Activated T-helper 1 cell treated with anti-CD3 and anti-CD28 coated beads, Interleukin-12 subunit alpha, Interleukin-12 subunit beta, Interleukin-2, Interleukin-4 antibody, amounts not matched to agents 30 ng/mL and 10 ng/mL and 1 ng/mL, durations not matched to agents 14 hours and 24 hours and 36 hours (primary cell): ENCODE measurements at regions of chr7 and their contacts with region 1.

Region 1: DNA sequence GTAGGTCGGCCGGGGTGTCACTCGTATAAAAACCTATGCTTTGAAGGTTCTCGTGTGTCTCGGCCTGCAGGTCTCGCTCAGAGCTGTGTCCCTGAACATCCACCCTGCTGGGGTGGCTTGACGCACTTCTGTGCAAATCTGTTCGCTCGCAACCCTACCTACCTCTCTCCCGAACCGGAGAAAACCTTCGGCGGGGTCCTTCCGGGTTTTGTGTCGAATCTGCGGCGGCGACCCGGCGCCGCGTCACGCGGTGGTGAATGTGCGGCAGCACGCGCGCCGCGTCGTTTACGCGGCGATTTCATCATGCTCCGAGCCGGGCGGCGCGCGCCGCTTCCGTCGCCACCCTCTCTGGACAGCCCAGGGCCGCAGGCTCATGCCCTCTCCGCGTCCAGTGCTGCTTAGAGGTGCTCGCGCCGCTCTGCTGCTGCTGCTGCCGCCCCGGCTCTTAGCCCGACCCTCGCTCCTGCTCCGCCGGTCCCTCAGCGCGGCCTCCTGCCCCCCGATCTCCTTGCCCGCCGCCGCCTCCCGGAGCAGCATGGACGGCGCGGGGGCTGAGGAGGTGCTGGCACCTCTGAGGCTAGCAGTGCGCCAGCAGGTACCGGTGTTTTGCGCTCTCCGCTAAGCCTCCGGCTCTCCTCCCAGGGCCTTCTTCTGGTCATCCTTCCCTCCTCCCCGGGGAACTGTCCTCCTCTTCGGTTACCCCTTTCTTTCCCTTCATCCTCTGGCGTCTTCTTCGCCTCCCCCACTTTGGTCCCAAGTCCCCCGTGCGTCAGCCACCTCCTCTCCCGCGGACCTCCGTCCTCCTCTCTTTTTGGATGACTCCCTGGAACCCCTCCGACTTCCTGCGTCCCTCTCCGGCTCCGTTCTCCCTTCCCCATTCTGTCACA is at the start of gene GARS1:
- DNase-seq: peak; percentile 88
- H3K4me3 Mint-ChIP-seq: peak within 1 kb of the TSS; percentile 99
- H3K27ac Mint-ChIP-seq: peak within 1 kb of the TSS; percentile 99
- H3K4me1 Mint-ChIP-seq: peaks cover 71% of the 10 kb centered on the region
- H3K27me3 Mint-ChIP-seq: no peaks in the 10 kb centered on the region
- total RNA-seq, gene GARS1: 234 and 250 TPM in 2 replicates

Region 2: DNA sequence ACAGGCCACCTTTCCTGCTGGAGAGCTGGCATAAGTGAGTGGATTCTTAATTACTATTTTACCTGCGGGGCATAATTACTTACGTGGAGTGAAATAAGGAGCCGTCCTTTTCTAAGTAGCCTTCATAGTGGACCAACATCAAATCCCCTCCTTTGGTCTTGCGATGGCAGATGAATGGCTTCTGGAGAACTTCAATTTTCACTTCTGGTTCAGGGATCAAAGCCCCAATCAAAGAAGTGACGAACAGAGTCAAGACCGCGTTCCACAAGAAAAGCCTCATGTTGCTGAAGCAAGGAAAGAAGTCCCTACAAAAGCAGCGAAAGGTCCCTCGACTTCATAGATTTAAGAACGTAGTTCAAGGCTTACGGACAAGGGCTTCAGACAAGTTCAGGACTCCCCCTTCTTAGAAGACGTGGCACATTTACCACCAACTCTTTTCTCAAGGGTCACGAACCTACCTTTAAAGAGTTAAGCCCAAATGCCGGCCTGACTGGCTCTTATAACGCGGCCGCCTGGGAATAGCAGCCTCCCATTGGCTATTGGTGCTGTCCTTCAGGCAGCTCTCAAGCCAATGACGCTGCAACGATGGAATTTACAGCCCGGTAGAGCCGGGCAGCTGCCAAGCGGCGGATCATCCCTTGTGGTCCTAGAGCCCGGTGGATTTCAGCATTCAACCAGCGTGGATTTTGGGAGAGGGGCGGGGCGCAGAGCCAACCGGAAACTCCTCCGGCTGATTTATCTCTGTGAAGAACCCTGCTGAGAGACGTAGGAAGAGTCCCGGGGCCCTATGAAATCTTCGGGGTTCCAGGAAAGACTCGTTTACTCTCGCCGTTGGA is 568.3 kb before region 1 on chr7 and contains the start of gene FKBP14:
- intact Hi-C with region 1: loop called (anchors 1 kb)
- DNase-seq: peak; percentile 91
- H3K4me3 Mint-ChIP-seq: no peak within 1 kb of the TSS
- H3K27ac Mint-ChIP-seq: peak within 1 kb of the TSS; percentile 89
- H3K4me1 Mint-ChIP-seq: peaks cover 44% of the 10 kb centered on the region
- H3K27me3 Mint-ChIP-seq: no peaks in the 10 kb centered on the region
- total RNA-seq, gene FKBP14: 8.4 and 10.6 TPM in 2 replicates

Region 3: DNA sequence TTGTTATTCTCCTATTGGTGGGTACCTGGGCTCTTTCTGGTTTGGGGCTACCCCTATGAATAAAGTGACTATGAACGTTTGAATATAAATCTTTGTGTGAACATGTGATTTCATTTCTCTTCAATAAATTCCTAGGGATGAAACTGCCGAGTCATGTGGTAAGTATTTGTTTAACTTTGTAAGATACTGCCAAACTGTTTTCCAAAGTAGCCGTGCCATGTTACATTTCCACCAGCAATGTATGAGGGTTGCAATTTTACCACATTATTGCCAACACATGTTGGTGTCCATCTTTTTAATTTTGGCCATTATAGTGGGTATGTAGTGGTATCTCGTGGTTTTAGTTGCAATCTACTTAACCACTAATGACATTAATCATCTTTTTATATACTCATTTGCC is 215.7 kb before region 1 on chr7:
- intact Hi-C with region 1: no loop called
- DNase-seq: no peak
- H3K4me3 Mint-ChIP-seq: no peak overlapping the region
- H3K27ac Mint-ChIP-seq: no peak overlapping the region
- H3K4me1 Mint-ChIP-seq: no peaks in the 10 kb centered on the region
- H3K27me3 Mint-ChIP-seq: no peaks in the 10 kb centered on the region

Region 4: GRCh38 chr7:30478349-30479201 is 116.2 kb before region 1 on chr7 and contains the start of gene NOD1:
- intact Hi-C with region 1: loop called (anchors 2 kb)
- DNase-seq: peak; percentile 71
- H3K4me3 Mint-ChIP-seq: peak within 1 kb of the TSS; percentile 90
- H3K27ac Mint-ChIP-seq: peak within 1 kb of the TSS; percentile 91
- H3K4me1 Mint-ChIP-seq: peaks cover 61% of the 10 kb centered on the region
- H3K27me3 Mint-ChIP-seq: no peaks in the 10 kb centered on the region
- total RNA-seq, gene NOD1: 9.1 and 13.1 TPM in 2 replicates

Region 5: DNA sequence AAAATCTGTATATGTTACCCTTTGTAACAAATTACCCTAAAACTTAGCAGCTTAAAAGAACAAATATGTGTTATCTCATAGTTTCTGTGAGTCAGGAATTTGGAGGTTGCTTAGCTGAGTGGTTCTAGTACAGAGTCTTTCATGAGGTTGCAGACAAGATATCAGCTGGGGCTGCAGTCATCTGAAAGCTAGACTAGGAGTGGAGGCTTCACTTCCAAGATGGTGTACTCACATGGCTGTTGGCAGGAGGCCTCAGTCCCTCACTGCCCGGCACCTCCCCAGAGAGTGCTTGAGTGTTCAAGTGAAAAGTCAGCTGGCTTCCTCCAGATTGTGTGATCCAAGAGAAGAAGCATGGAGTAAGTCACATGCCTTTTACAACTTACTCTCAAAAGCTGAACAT is 73.3 kb before region 1 on chr7:
- intact Hi-C with region 1: no loop called
- DNase-seq: no peak
- H3K4me3 Mint-ChIP-seq: no peak overlapping the region
- H3K27ac Mint-ChIP-seq: no peak overlapping the region
- H3K4me1 Mint-ChIP-seq: no peaks in the 10 kb centered on the region
- H3K27me3 Mint-ChIP-seq: no peaks in the 10 kb centered on the region

Region 6: GRCh38 chr7:30605832-30606231 is 11.0 kb after region 1 on chr7:
- intact Hi-C with region 1: loop called (anchors 1 kb)
- DNase-seq: no peak
- H3K4me3 Mint-ChIP-seq: no peak overlapping the region
- H3K27ac Mint-ChIP-seq: no peak overlapping the region
- H3K4me1 Mint-ChIP-seq: peaks cover 37% of the 10 kb centered on the region
- H3K27me3 Mint-ChIP-seq: no peaks in the 10 kb centered on the region

Region 7: GRCh38 chr7:30627026-30627425 is 32.2 kb after region 1 on chr7:
- intact Hi-C with region 1: loop called (anchors 2 kb)
- DNase-seq: no peak
- H3K4me3 Mint-ChIP-seq: no peak overlapping the region
- H3K27ac Mint-ChIP-seq: peak overlapping the region; percentile 88
- H3K4me1 Mint-ChIP-seq: peaks cover 19% of the 10 kb centered on the region
- H3K27me3 Mint-ChIP-seq: no peaks in the 10 kb centered on the region

Region 8: GRCh38 chr7:31695859-31696614 is 1101.2 kb after region 1 on chr7:
- intact Hi-C with region 1: no loop called
- DNase-seq: no peak
- H3K4me3 Mint-ChIP-seq: no peak overlapping the region
- H3K27ac Mint-ChIP-seq: no peak overlapping the region
- H3K4me1 Mint-ChIP-seq: no peaks in the 10 kb centered on the region
- H3K27me3 Mint-ChIP-seq: peaks cover 2% of the 10 kb centered on the region

Region 9: DNA sequence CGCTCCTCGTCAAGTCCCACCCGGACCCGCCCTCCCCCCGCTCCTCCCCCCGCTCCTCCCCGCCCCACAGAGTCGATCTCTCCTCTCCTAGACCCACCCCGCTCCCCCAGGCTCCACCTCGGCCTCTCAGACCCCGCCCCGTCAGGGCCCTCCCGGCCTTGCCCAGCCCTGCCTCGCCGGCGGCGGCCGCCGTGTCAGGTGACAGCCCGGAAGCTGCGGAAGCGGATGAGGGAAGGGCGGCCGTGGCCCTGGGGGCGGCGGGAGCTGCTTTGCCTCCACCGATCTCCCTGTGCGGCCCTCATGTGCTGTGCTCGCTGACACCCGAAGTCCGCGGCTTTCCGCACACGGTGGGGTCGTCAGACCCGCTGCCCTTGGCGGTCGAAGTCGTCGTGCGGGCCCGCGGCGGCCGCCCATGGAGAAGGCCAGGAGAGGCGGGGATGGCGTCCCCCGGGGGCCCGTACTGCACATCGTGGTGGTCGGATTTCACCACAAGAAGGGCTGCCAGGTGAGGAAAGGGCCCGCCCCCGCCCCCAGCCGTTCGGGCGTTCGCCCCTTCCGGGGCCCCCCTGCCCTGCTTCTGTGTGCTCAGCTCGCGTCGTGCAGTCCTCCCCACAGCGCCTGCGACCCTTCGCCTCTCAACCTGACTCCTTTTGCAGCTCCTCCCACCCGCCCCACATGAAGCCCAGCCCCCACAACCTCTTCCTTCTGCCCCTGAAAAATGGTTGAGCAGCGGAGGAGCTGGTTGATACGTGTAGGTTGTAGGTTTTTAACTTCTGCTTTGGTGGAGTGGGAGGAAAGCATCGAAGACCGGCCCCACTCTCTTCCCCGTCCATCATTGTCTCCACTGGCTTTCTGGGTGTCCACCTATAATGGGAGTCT is 1900.7 kb after region 1 on chr7 and contains the start of gene AVL9:
- intact Hi-C with region 1: loop called (anchors 10 kb)
- DNase-seq: peak; percentile 99
- H3K4me3 Mint-ChIP-seq: peak within 1 kb of the TSS; percentile 93
- H3K27ac Mint-ChIP-seq: peak within 1 kb of the TSS; percentile 98
- H3K4me1 Mint-ChIP-seq: peaks cover 32% of the 10 kb centered on the region
- H3K27me3 Mint-ChIP-seq: no peaks in the 10 kb centered on the region
- total RNA-seq, gene AVL9: 46.7 and 50.6 TPM in 2 replicates